H1 (cell line): ENCODE measurements at regions of chr6 and their contacts with region 1.

Region 1: GRCh38 chr6:117555882-117556498 is 46.3 kb downstream of the GOPC start:
- DNase-seq: peak in 1 of 2 experiments; percentile 74
- H3K4me3 ChIP-seq: no peak overlapping the region
- H3K27ac ChIP-seq: no peak overlapping the region
- H3K4me1 ChIP-seq: no peaks in the 10 kb centered on the region
- H3K27me3 ChIP-seq: no peaks in the 10 kb centered on the region
- CTCF ChIP-seq: peak in 2 of 3 experiments; percentile 44 to 63; a peak in 3 of 4 replicates
- EP300 ChIP-seq: no peak
- POLR2A ChIP-seq: no peak
- RAD21 ChIP-seq: peak; percentile 48 to 59

Region 2: GRCh38 chr6:117568247-117568646 is 12.3 kb after region 1 on chr6:
- CTCF ChIA-PET with region 1: interaction called, 11 read pairs
- POLR2A ChIA-PET with region 1: no interaction called
- DNase-seq: no peak
- H3K4me3 ChIP-seq: no peak overlapping the region
- H3K27ac ChIP-seq: no peak overlapping the region
- H3K4me1 ChIP-seq: no peaks in the 10 kb centered on the region
- H3K27me3 ChIP-seq: peaks cover 0 to 1% (median 0%) of the 10 kb centered on the region in 4 experiments; a peak in 1 of 7 replicates
- CTCF ChIP-seq: no peak
- EP300 ChIP-seq: no peak
- POLR2A ChIP-seq: no peak
- RAD21 ChIP-seq: no peak

Region 3: GRCh38 chr6:117610201-117610600 is 54.2 kb after region 1 on chr6:
- CTCF ChIA-PET with region 1: no interaction called
- POLR2A ChIA-PET with region 1: no interaction called
- DNase-seq: no peak
- H3K4me3 ChIP-seq: no peak overlapping the region
- H3K27ac ChIP-seq: no peak overlapping the region
- H3K4me1 ChIP-seq: peaks cover 0 to 10% (median 3%) of the 10 kb centered on the region in 4 experiments; a peak in 6 of 7 replicates
- H3K27me3 ChIP-seq: no peaks in the 10 kb centered on the region
- CTCF ChIP-seq: no peak
- EP300 ChIP-seq: no peak
- POLR2A ChIP-seq: no peak
- RAD21 ChIP-seq: no peak